Activated T-helper 1 cell treated with anti-CD3 and anti-CD28 coated beads, Interleukin-12 subunit alpha, Interleukin-12 subunit beta, Interleukin-2, Interleukin-4 antibody, amounts not matched to agents 30 ng/mL and 10 ng/mL and 1 ng/mL, durations not matched to agents 14 hours and 24 hours and 36 hours (primary cell): ENCODE measurements at regions of chr5 and their contacts with region 1.

Region 1: GRCh38 chr5:172458976-172459782 is 4.9 kb upstream of the SH3PXD2B start:
- DNase-seq: no peak
- H3K4me3 Mint-ChIP-seq: no peak overlapping the region
- H3K27ac Mint-ChIP-seq: no peak overlapping the region
- H3K4me1 Mint-ChIP-seq: peaks cover 20% of the 10 kb centered on the region
- H3K27me3 Mint-ChIP-seq: peaks cover 22% of the 10 kb centered on the region

Region 2: DNA sequence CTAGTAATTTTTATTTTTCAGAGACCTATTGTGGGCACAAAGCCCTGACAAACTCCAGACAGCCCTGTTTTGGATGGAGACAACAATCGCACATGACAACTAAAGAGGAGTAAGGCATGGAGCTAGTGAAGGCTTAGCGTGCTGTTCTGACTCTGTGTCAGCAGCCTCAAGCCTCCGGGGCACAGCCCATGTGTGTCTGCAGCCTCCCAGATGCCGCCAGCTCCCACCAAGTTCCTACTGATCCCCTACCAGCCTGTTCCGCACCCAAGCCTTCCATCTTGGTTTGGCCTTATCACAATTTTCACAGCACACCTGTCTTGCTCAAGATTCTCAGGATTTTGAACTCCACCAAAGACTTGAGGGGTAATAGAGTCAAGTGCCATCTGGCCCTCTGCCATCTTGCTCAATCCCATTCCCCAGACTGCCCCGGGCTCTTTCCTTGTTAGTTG is 65.4 kb after region 1 on chr5:
- intact Hi-C with region 1: no loop called
- DNase-seq: no peak
- H3K4me3 Mint-ChIP-seq: no peak overlapping the region
- H3K27ac Mint-ChIP-seq: no peak overlapping the region
- H3K4me1 Mint-ChIP-seq: no peaks in the 10 kb centered on the region
- H3K27me3 Mint-ChIP-seq: peaks cover 2% of the 10 kb centered on the region

Region 3: GRCh38 chr5:172932313-172933017 is 473.3 kb after region 1 on chr5:
- intact Hi-C with region 1: loop called (anchors 10 kb)
- DNase-seq: peak; percentile 50
- H3K4me3 Mint-ChIP-seq: no peak overlapping the region
- H3K27ac Mint-ChIP-seq: peak overlapping the region; percentile 7
- H3K4me1 Mint-ChIP-seq: peaks cover 8% of the 10 kb centered on the region
- H3K27me3 Mint-ChIP-seq: no peaks in the 10 kb centered on the region